Calu3 (cell line): ENCODE measurements at regions of chr1 and their contacts with region 1.

Region 1: DNA sequence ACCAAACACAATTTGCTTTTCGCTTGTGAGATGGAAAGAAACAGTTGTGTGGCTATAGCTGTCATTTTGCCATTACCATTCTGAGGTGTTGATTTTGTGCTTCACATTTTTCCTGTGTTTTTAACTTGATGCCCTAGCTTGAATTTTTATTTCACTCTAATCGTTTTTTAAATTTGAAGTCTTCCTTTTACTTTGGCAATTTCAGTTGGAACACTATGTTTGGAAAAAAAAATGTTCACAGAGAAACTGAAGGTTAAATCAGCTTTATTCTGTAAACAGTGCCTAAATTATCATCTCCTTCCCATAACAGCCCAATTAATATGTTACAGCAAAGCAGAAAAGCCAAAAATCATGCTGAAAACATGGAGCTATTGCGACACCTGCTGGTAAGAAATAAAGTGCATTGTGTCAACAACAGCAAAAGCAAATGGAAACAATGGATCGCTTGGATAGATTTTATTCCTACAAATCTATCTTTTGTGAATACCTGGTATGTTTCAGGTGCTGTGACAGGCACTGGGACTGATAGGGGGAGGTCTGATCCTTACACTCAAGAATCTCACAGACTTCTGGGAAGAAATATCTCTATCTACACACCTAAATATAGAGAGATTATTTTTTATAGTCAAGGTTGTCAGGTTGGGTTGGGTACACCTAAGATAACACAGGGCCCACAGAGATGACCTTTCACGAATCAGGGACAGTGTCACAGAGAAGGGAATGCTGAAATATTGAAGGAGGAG is 16.2 kb upstream of the ERICH3 start:
- DNase-seq: peak; percentile 61
- H3K4me3 Mint-ChIP-seq: no peak overlapping the region
- H3K27ac Mint-ChIP-seq: peak overlapping the region; percentile 34
- H3K4me1 Mint-ChIP-seq: peaks cover 11% of the 10 kb centered on the region
- H3K27me3 Mint-ChIP-seq: no peaks in the 10 kb centered on the region
- CTCF ChIP-seq: peak; percentile 63

Region 2: GRCh38 chr1:73839922-73840321 is 849.9 kb before region 1 on chr1:
- CTCF ChIA-PET with region 1: interaction called, 4 read pairs
- intact Hi-C with region 1: loop called (anchors 2 kb)
- DNase-seq: peak; percentile 62
- H3K4me3 Mint-ChIP-seq: no peak overlapping the region
- H3K27ac Mint-ChIP-seq: no peak overlapping the region
- H3K4me1 Mint-ChIP-seq: no peaks in the 10 kb centered on the region
- H3K27me3 Mint-ChIP-seq: no peaks in the 10 kb centered on the region
- CTCF ChIP-seq: peak; percentile 60

Region 3: DNA sequence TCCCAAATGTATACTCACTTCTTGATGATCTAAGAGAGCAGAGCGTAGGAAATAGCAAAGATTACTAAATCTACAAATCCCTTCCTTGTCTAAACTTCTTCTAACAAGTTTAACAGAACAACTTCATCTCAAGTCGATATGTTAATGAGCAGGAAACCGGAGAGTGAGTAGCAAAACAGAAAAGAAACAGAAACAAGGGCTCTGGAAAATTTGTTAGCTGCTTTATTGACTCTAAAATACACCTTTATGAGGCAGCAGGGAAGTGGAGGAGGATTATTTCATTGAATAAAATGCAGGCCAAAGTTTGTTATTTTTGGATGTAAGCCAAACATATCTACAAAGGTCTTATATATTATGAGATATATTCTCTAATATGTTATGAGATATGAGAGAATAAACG is 684.3 kb before region 1 on chr1:
- CTCF ChIA-PET with region 1: no interaction called
- intact Hi-C with region 1: loop called (anchors 2 kb)
- DNase-seq: no peak
- H3K4me3 Mint-ChIP-seq: peak overlapping the region; percentile 33
- H3K27ac Mint-ChIP-seq: peak overlapping the region; percentile 30
- H3K4me1 Mint-ChIP-seq: peaks cover 20% of the 10 kb centered on the region
- H3K27me3 Mint-ChIP-seq: no peaks in the 10 kb centered on the region
- CTCF ChIP-seq: no peak

Region 4: DNA sequence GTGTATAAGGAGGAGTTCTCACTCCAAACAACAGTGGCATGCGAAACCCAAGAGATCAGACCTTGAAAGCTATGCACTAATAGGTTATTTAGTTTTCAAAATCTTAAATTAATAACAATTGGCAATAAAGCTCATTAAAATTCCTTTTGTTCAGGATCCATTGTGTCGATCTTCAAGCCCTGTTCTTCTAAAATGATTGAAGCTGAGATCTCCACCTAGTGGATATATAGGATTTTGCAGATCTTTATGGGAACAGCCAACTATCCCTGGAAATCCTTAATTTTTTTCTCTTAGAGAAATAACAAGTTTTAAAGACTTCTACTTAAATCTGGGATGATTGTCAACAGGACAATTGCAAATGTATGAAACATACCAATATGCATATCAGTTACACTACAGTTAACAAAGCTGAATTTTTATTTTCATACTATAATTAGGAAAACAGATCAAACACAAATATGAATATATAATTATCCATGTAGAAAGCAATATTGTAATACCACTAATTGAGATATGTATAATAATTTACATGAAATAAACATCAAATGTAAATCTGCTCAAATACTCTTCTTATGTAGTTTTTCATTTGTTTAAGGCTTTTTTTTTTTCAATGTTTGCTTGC is 220.7 kb before region 1 on chr1:
- CTCF ChIA-PET with region 1: no interaction called
- intact Hi-C with region 1: loop called (anchors 2 kb)
- DNase-seq: no peak
- H3K4me3 Mint-ChIP-seq: no peak overlapping the region
- H3K27ac Mint-ChIP-seq: no peak overlapping the region
- H3K4me1 Mint-ChIP-seq: no peaks in the 10 kb centered on the region
- H3K27me3 Mint-ChIP-seq: no peaks in the 10 kb centered on the region
- CTCF ChIP-seq: no peak

Region 5: DNA sequence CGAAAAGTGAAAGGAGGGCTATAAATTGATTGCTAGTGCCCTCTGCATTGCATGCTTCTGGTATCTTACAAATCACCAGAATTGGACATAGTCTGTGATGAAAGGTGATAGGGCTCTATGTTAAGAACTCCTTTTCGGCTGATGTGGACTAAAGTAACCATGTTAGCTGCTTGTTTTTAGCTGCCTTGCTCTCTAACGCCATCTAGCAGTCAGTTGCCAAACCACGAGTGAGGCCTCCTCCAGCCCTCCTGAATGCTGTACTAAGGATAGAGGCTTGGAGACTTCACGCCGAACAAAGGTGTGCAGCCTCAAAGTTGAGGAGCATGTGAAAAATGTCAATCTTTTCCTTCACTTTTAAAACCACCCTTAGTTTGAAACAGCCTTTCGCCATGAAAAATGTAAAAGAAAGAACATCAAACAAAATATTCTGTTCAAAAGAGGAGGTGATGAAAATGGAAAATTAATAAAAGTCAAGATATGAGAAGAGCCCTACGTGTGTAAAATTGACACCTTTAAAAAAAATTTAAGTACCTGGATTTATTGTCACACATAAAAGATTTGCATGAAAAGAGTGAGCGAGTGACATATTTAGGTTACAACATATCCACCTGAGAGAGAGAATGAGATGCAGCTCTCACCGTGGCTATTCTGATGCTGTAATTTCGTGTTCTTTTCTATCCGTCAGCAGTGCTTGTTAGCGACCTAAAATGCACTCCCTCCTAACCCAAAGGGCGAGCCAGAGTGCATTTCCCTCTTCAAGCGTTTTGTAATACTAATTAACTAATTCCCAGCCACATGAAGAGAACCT is 185.5 kb before region 1 on chr1:
- CTCF ChIA-PET with region 1: interaction called, 8 read pairs
- intact Hi-C with region 1: loop called (anchors 1 kb)
- DNase-seq: peak; percentile 72
- H3K4me3 Mint-ChIP-seq: no peak overlapping the region
- H3K27ac Mint-ChIP-seq: no peak overlapping the region
- H3K4me1 Mint-ChIP-seq: no peaks in the 10 kb centered on the region
- H3K27me3 Mint-ChIP-seq: no peaks in the 10 kb centered on the region
- CTCF ChIP-seq: peak; percentile 81

Region 6: DNA sequence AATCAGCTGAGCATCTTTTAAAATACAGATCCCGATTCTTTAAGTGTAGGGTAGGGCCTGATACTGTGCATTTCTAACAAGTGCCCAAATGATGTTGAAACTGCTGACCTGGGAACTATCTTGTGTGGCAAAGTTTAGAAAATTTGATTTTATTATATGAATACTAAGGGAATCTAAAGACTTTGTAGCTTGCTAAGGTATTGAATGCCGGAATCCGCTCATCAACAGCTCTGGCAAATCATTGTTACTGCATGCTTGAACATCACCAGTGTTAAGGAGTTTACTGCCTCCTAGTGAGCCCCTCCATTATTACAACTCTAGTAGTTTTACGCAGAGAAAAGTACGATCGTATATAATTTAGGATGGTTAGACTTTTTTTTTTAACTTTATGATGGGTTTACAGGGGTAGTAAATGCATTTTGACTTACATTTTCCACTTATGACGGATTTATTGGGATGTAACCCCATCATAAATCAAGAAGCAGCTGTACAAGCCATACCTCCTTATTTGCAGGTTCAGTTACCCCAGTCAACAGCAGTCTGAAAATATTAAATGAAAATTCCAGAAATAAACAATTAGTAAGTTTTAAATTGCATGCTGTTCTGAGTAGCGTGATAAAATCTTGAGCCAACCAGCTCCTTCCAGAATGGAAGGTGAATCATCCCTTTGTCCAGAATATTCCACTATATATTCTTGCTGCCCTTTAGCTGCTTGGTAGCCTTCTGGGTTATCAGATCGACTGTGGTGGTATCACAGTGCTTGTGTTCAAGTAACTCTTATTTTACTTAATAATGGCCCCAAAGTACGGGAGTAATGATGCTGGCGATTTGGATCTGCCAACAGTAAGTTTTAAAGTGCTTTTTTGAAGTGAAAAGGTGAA is 44.1 kb after region 1 on chr1:
- CTCF ChIA-PET with region 1: no interaction called
- intact Hi-C with region 1: no loop called
- DNase-seq: peak; percentile 58
- H3K4me3 Mint-ChIP-seq: peak overlapping the region; percentile 82
- H3K27ac Mint-ChIP-seq: peak overlapping the region; percentile 90
- H3K4me1 Mint-ChIP-seq: peaks cover 28% of the 10 kb centered on the region
- H3K27me3 Mint-ChIP-seq: no peaks in the 10 kb centered on the region
- CTCF ChIP-seq: peak; percentile 37